ENCODE measurements at regions of chr19 and their contacts with region 1.

Region 1: DNA sequence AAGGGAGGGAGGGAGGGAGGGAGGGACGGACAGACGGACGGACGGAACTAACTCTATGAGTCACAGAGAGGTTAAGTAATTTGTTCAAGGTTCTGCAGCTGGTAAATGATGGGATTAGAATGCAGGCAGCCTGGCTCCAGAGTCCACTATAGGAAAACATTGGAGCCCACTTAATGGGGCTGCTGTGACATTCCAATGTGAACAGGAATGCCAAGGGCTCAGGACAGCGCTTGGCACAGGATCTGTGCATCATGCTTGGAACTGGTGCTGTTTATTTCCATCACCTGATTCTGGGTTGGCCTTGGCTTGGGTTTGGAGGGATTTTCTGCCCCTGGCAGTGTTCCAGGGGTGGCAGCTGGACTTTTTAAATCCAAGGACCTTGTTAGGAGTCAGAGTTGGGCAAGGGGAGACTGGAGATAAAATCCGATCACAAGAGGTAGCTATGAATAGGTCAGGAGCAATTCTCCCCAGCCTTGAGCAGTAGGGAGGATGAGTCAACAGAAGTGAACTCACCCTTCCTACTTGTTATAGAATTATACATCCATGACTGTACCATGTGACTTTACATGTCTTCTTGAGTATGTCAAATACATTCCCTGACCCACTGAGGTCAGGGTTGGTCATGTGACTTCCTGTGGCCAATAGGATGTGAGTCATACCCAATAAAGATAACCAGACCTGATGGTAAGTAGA is 7.8 kb upstream of the HIF3A start:
- DNase-seq: peak; percentile 34 to 81
- H3K4me3 ChIP-seq: no peak overlapping the region
- H3K27ac ChIP-seq: peak overlapping the region; percentile 20 to 63
- H3K4me1 ChIP-seq: peaks cover 0 to 10% (median 6%) of the 10 kb centered on the region in 4 donors
- H3K27me3 ChIP-seq: no peaks in the 10 kb centered on the region
- CTCF ChIP-seq: no peak

Region 2: DNA sequence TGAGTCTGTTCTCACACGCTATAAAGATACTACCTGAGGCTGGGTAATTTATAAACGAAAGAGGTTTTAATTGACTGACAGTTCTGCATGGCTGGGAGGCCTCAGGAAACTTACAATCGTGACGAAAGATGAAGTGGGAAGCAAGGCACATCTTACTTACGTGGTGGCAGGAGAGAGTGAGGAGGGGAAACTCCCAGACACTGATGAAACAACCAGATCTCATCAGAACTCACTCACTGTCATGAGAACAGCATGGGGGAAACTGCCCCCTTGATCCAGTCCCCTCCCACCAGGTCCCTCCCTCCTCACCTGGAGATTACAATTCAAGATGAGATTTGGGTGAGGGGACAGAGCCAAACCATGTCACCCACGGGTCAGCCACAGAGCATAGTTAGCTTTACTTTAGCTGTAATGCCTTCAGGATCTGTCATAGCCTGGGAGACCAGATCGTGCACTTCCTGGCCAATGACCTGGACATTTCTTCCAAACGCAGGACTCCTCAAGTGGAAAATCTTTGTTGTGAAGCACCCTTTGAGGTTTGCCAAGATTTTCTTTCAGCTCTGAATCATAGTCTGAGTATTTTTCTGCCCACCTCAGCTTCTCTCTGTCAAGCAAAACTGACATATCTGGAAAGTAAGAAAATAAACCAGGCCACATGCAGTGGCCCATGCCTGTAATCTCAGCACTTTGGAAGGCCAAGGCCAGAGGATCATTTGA is 17.4 kb before region 1 on chr19:
- intact Hi-C with region 1: no loop called
- DNase-seq: no peak
- H3K4me3 ChIP-seq: no peak overlapping the region
- H3K27ac ChIP-seq: no peak overlapping the region
- H3K4me1 ChIP-seq: peaks cover 0 to 10% (median 3%) of the 10 kb centered on the region in 4 donors
- H3K27me3 ChIP-seq: peaks cover 0 to 24% of the 10 kb centered on the region in 2 donors
- CTCF ChIP-seq: no peak

Region 3: GRCh38 chr19:46346821-46347571 is 58.0 kb after region 1 on chr19 and contains the start of gene PPP5C:
- intact Hi-C with region 1: loop called (anchors 10 kb)
- DNase-seq: peak; percentile 86 to 94
- H3K4me3 ChIP-seq: peak within 1 kb of the TSS; percentile 71 to 90
- H3K27ac ChIP-seq: peak within 1 kb of the TSS; percentile 76 to 77
- H3K4me1 ChIP-seq: peaks cover 6 to 54% (median 46%) of the 10 kb centered on the region in 4 donors
- H3K27me3 ChIP-seq: no peaks in the 10 kb centered on the region
- CTCF ChIP-seq: peak; percentile 53 to 68

Region 4: DNA sequence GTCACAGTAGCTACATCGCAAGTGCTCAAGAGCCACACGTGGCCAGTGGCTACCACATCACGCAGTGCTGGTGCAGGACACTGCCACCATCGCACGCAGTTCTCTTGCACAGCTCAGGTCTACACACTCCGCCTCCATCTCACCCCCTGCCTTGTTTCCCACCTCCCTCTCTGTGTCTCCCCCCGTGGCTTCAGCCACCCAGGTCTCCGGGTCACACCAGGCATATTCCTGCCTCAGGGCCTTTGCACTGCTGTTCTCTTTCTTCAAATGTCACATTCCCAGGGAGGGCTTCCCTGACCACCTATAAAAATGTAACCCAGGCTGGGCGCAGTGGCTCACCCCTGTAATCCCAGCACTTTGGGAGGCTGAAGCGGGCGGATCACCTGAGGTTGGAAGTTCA is 113.7 kb after region 1 on chr19:
- intact Hi-C with region 1: no loop called
- DNase-seq: no peak
- H3K4me3 ChIP-seq: no peak overlapping the region
- H3K27ac ChIP-seq: peak overlapping the region in 1 of 2 donors; percentile 23
- H3K4me1 ChIP-seq: peaks cover 0 to 44% (median 33%) of the 10 kb centered on the region in 4 donors
- H3K27me3 ChIP-seq: no peaks in the 10 kb centered on the region
- CTCF ChIP-seq: no peak